ENCODE measurements at regions of chr11 and their contacts with region 1.

Region 1: DNA sequence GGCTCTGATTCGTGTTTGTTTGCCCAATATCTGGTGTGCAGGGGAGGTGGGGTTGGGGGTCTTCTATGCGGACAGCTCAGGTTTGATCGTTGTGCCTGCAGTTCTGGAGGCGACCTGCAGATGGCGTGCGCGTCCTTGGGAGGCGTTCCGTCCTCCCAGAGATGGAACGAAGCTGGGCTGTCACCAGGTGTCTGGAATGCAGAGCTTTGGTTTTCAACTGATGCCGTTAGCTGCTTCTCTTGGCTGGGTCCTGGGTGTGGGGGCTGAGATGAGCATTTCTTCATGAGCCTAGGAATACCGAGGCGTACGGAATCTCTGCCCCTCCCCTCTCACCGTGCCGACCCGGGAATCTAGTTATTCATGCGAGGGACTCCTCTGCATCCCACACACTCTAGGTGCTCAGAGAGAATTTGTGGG is 98.6 kb downstream of the CEP164 start:
- DNase-seq: peak; percentile 46 to 79 (median 66)
- ATAC-seq: peak in 3 of 4 donors; percentile 56 to 72 (median 70)
- H3K4me3 ChIP-seq: no peak overlapping the region
- H3K27ac ChIP-seq: no peak overlapping the region
- H3K4me1 ChIP-seq: peaks cover 0 to 8% (median 1%) of the 10 kb centered on the region in 12 donors
- H3K27me3 ChIP-seq: no peaks in the 10 kb centered on the region
- CTCF ChIP-seq: peak; percentile 85 to 97 (median 94)
- POLR2A ChIP-seq: no peak

Region 2: GRCh38 chr11:117026593-117027330 is 399.5 kb before region 1 on chr11:
- intact Hi-C with region 1: no loop called
- DNase-seq: no peak
- ATAC-seq: peak in 2 of 4 donors; percentile 33 to 54
- H3K4me3 ChIP-seq: no peak overlapping the region
- H3K27ac ChIP-seq: no peak overlapping the region
- H3K4me1 ChIP-seq: peaks cover 0 to 50% (median 15%) of the 10 kb centered on the region in 12 donors
- H3K27me3 ChIP-seq: no peaks in the 10 kb centered on the region
- CTCF ChIP-seq: no peak
- POLR2A ChIP-seq: no peak

Region 3: GRCh38 chr11:117384041-117384440 is 42.2 kb before region 1 on chr11:
- intact Hi-C with region 1: no loop called
- DNase-seq: no peak
- ATAC-seq: no peak
- H3K4me3 ChIP-seq: no peak overlapping the region
- H3K27ac ChIP-seq: no peak overlapping the region
- H3K4me1 ChIP-seq: peaks cover 0 to 13% (median 4%) of the 10 kb centered on the region in 12 donors
- H3K27me3 ChIP-seq: no peaks in the 10 kb centered on the region
- CTCF ChIP-seq: no peak
- POLR2A ChIP-seq: no peak

Region 4: DNA sequence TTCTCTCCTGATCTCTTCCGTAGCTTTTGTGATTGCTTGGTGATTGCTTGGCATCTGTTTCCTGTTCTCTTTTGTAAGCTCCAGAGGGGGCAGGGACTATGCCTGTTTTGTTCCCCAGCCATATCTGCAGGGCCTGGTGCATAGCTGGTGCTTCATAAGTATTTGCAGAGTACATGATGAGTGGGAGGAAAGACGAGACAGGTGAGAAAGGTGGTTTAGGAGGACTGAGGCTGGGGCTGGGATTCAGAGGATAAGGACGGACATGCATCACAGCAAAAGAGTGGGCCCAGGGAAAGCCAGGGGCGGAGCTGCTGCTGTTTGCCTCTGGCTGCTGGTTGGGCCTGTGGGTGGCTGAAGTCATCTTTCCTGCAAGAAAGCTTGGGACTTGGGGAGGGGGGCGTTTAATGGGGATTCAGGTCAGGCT is 308.3 kb after region 1 on chr11:
- intact Hi-C with region 1: no loop called
- DNase-seq: no peak
- ATAC-seq: no peak
- H3K4me3 ChIP-seq: no peak overlapping the region
- H3K27ac ChIP-seq: no peak overlapping the region
- H3K4me1 ChIP-seq: no peaks in the 10 kb centered on the region
- H3K27me3 ChIP-seq: no peaks in the 10 kb centered on the region
- CTCF ChIP-seq: no peak
- POLR2A ChIP-seq: no peak

Region 5: GRCh38 chr11:117807482-117808327 is 381.4 kb after region 1 on chr11:
- intact Hi-C with region 1: loop called in 5 of 10 experiments (anchors 5 kb)
- DNase-seq: peak; percentile 70 to 89 (median 79)
- ATAC-seq: peak; percentile 31 to 59 (median 45)
- H3K4me3 ChIP-seq: no peak overlapping the region
- H3K27ac ChIP-seq: no peak overlapping the region
- H3K4me1 ChIP-seq: peaks cover 0 to 23% (median 3%) of the 10 kb centered on the region in 12 donors
- H3K27me3 ChIP-seq: peaks cover 0 to 12% (median 0%) of the 10 kb centered on the region in 9 donors
- CTCF ChIP-seq: peak; percentile 84 to 96 (median 89)
- POLR2A ChIP-seq: no peak

Region 6: GRCh38 chr11:117817368-117818040 is 391.2 kb after region 1 on chr11:
- intact Hi-C with region 1: loop called in 3 of 10 experiments (anchors 1 to 5 kb)
- DNase-seq: peak; percentile 78 to 88 (median 80)
- ATAC-seq: peak; percentile 43 to 73 (median 67)
- H3K4me3 ChIP-seq: peak overlapping the region in 6 of 12 donors; percentile 7 to 47 (median 32)
- H3K27ac ChIP-seq: peak overlapping the region in 6 of 12 donors; percentile 28 to 75 (median 42)
- H3K4me1 ChIP-seq: peaks cover 0 to 60% (median 28%) of the 10 kb centered on the region in 12 donors
- H3K27me3 ChIP-seq: no peaks in the 10 kb centered on the region
- CTCF ChIP-seq: peak; percentile 97 to 100 (median 99)
- POLR2A ChIP-seq: no peak